Activated naive CD8-positive, alpha-beta T cell treated with anti-CD3 and anti-CD28 coated beads, Interleukin-2, amount 10 ng/mL, durations not matched to agents 7 days and 5 days (primary cell): ENCODE measurements at regions of chr6 and their contacts with region 1.

Region 1: GRCh38 chr6:118709859-118710350 is 58.5 kb upstream of the CEP85L start:
- DNase-seq: peak; percentile 53
- ATAC-seq: peak; percentile 93
- H3K4me3 Mint-ChIP-seq: peak overlapping the region; percentile 93
- H3K27ac Mint-ChIP-seq: peak overlapping the region; percentile 90
- H3K4me1 Mint-ChIP-seq: peaks cover 61% of the 10 kb centered on the region
- H3K27me3 Mint-ChIP-seq: no peaks in the 10 kb centered on the region

Region 2: DNA sequence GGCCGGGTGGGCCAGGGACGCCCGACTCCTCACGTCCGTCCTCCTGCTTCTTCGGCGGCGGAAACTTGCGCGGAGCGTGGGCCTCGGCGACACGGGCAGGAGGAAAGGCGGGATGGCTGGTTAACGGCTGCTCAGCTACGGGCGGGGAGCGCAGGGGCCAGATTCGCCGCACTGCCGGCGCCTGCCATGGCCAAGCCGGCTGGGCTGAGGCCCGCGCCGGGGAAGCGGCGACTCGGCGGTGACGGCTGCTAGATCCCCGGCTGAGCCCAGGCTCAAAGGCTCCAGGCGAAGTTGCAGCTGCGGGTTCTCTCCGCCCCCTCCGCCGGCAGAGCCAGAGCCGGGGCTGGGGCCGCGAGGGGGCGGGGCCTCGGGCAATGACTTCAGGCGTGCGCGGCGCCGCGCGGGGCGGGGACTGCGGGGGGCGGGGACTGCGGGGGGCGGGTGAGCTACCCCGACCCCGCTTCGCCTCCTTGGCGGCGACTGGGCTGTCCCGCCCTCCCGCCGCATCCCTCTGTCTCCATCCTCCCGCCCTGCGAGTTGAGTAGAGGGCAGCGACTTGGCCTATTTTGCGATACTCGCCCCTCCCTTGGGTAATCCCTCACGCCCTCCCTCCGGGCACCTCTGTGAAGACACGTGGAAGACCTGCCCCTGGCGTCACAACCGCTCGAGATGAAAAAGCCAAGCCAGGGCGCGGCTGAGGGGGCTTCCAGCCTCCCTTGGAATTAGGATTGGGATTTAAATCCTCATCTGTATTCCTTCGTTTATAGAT is 58.4 kb before region 1 on chr6 and contains the start of gene CEP85L:
- POLR2A ChIA-PET with region 1: interaction called, 30 read pairs
- DNase-seq: peak; percentile 94
- ATAC-seq: peak; percentile 92
- H3K4me3 Mint-ChIP-seq: peak within 1 kb of the TSS; percentile 87
- H3K27ac Mint-ChIP-seq: peak within 1 kb of the TSS; percentile 86
- H3K4me1 Mint-ChIP-seq: peaks cover 35% of the 10 kb centered on the region
- H3K27me3 Mint-ChIP-seq: no peaks in the 10 kb centered on the region
- total RNA-seq, gene CEP85L: 48.9 to 53.1 TPM

Region 3: DNA sequence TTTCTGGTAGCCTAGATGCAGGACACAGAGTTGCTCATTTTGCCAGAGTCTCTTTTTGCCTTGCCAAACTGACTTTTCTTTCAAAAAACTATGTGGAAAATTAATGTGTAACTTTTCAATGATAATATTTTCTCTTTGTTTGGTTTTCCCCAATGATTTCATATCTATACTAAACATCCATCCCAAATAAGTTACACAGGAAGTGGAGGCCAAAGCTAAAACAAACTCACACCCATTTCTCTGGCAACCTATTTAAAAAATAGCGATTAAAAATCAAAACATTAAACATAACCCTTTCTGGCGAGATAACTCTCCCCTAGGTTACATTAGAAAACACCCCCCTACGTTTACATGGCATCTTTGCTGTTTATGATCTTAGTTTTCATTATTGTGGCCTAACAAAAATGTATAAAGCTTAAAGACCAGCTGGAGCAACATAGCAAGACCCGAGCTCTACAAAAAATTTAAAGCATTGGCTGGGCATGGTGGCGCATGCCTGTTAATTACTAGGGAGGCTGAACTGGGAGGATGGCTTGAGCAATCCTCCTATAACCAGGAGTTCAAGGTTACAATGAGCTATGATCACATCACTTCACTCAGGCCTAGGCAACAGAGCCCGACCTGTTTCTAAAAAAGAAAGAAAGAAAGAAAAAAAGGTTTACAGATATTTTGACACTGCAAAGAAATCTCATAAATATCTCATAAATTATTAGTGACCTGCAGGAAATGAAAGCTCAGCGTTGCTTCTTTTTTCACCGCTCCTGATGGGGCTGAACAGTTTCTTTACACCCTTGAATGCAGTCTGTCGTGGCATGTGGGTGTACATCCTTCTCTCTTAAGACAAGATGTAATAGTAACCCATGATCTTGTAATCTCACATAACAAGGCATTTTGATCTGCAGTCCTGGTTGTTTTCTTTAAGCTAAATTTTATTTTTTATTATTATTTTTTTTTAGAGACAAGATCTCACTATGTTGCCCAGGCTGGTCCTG is 25.7 kb before region 1 on chr6:
- POLR2A ChIA-PET with region 1: interaction called, 16 read pairs
- DNase-seq: no peak
- ATAC-seq: no peak
- H3K4me3 Mint-ChIP-seq: no peak overlapping the region
- H3K27ac Mint-ChIP-seq: peak overlapping the region; percentile 44
- H3K4me1 Mint-ChIP-seq: peaks cover 45% of the 10 kb centered on the region
- H3K27me3 Mint-ChIP-seq: no peaks in the 10 kb centered on the region

Region 4: GRCh38 chr6:118724211-118724610 is 14.3 kb after region 1 on chr6:
- POLR2A ChIA-PET with region 1: interaction called, 24 read pairs
- DNase-seq: no peak
- ATAC-seq: peak; percentile 29
- H3K4me3 Mint-ChIP-seq: peak overlapping the region; percentile 63
- H3K27ac Mint-ChIP-seq: peak overlapping the region; percentile 66
- H3K4me1 Mint-ChIP-seq: peaks cover 42% of the 10 kb centered on the region
- H3K27me3 Mint-ChIP-seq: no peaks in the 10 kb centered on the region

Region 5: GRCh38 chr6:118881440-118882313 is 171.8 kb after region 1 on chr6:
- POLR2A ChIA-PET with region 1: no interaction called
- DNase-seq: no peak
- ATAC-seq: no peak
- H3K4me3 Mint-ChIP-seq: no peak overlapping the region
- H3K27ac Mint-ChIP-seq: no peak overlapping the region
- H3K4me1 Mint-ChIP-seq: peaks cover 28% of the 10 kb centered on the region
- H3K27me3 Mint-ChIP-seq: no peaks in the 10 kb centered on the region

Region 6: DNA sequence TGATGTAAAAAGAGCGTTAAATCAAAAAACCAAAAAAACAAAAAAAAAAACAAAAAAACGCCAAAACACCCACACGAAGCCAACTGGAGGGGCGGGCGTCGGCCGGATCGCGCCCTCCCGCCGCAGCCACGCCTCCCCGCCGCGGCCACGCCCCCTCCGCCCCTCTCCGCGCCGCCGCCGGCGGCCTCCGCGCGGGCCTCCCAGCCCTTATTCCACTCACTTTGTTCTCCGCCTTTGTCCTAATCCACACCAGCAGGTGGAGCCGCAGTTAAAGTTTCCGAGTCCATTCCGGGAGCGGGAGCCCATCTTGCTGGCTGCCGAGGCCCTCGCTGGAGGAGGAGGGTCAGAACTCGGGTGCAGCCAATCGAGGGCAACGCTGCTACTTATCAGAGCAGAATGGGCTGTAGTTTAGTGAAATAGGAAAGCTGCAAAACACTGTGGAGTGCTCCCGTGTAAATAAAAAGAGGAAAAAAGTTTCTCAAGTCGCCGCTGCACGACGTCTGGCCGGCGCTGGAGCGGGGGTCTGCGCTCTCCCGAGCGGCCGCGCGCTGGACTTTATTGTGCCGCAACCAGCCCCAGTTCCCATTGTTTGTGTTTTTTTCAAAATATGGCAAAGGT is 184.0 kb after region 1 on chr6 and contains the start of gene ASF1A:
- POLR2A ChIA-PET with region 1: interaction called, 25 read pairs
- DNase-seq: peak; percentile 98
- ATAC-seq: peak; percentile 86
- H3K4me3 Mint-ChIP-seq: peak within 1 kb of the TSS; percentile 88
- H3K27ac Mint-ChIP-seq: peak within 1 kb of the TSS; percentile 94
- H3K4me1 Mint-ChIP-seq: peaks cover 39% of the 10 kb centered on the region
- H3K27me3 Mint-ChIP-seq: no peaks in the 10 kb centered on the region
- total RNA-seq, gene ASF1A: 64.6 to 66.8 TPM